K562 (cell line): ENCODE measurements at regions of chr11 and their contacts with region 1.

Region 1: DNA sequence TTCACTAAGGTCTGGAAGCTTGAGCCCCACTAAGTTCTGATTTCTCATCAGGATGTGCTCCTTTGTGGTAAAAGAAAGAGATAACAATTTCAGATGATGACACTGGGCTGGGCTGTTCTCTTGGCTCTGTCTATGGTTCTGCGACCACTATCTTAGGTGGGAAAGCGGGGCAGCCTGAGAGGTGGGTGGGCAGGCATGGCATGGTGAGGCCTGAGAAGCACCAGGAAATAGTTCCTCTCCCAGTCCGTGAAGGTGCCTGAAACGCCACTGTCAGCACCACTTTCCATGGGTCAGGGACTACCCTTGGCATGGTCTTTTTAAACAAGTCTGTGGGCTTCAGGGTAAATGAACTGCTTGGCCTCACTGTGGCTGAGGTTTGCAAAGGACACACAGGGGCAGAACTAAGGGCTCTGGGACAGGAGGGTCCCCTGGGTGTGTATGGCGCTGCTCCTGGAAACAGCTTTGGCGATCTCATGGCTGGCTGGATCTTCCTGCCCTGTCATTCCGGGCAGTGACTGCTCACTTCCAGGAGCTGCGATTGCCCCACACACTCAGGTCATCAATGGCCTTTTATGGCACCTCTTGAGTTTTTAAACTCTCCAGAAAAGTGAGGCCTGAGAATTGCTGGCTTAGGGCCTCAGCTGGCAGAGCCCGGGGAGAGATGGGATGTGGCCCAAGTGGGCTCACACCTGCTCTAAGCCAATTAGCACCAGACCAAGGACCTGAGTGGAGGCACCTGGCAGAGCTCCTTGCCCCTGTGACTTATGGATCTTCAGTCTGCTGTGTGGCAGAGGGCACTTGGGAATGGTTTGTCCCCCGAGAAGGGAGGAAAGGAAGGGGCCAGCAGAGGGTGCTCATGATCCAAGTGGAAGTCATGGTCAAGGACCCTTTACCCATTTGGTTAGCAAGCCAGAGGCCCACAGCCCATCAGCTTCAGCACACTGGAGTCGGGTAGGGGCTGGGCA is 55.6 kb upstream of the LYVE1 start:
- DNase-seq: peak; percentile 60 to 67 (median 62)
- ATAC-seq: peak; percentile 79
- H3K4me3 ChIP-seq: no peak overlapping the region
- H3K27ac ChIP-seq: no peak overlapping the region; the same call in 2 of the 3 replicates
- H3K4me1 ChIP-seq: peaks cover 9 to 13% of the 10 kb centered on the region in 2 experiments; a peak in 4 of 5 replicates
- H3K27me3 ChIP-seq: no peaks in the 10 kb centered on the region
- CTCF ChIP-seq: peak; percentile 72 to 80 (median 77)
- EP300 ChIP-seq: no peak
- POLR2A ChIP-seq: no peak
- RAD21 ChIP-seq: peak; percentile 78 to 89

Region 2: GRCh38 chr11:10413268-10413667 is 210.8 kb before region 1 on chr11:
- CTCF ChIA-PET with region 1: no interaction called
- POLR2A ChIA-PET with region 1: no interaction called
- in situ Hi-C with region 1: no loop called
- intact Hi-C with region 1: loop called (anchors 10 kb)
- DNase-seq: peak in 1 of 4 experiments; percentile 61
- ATAC-seq: peak; percentile 83
- H3K4me3 ChIP-seq: no peak overlapping the region
- H3K27ac ChIP-seq: no peak overlapping the region
- H3K4me1 ChIP-seq: peaks cover 12 to 19% of the 10 kb centered on the region in 2 experiments; a peak in 2 of 5 replicates
- H3K27me3 ChIP-seq: no peaks in the 10 kb centered on the region
- CTCF ChIP-seq: peak; percentile 45 to 66 (median 56); a peak in 5 of 6 replicates
- EP300 ChIP-seq: no peak
- POLR2A ChIP-seq: no peak
- RAD21 ChIP-seq: peak; percentile 80 to 93

Region 3: DNA sequence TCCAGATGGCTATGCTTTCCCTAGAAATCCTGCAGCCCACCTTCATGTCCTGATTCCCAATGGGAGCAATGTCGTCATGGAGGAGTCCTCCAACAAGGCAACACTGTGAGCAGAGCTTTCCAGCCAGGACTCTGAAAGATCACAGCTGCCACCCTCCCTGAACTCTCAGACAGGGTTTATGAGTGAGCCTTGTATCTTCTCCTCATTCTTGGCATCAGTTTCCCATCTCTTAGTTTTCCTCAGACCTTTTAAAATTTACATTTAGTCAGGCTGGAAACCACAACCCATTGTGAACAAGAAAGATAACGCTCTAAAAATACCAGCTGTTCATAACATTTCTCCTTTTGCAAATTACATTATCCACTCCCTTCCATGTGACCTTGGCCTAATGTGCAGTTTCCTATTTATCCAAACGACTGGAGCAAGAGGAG is 40.0 kb before region 1 on chr11:
- CTCF ChIA-PET with region 1: no interaction called
- POLR2A ChIA-PET with region 1: no interaction called
- in situ Hi-C with region 1: no loop called
- intact Hi-C with region 1: loop called (anchors 5 kb)
- DNase-seq: peak in 1 of 4 experiments; percentile 51
- ATAC-seq: no peak
- H3K4me3 ChIP-seq: no peak overlapping the region
- H3K27ac ChIP-seq: peak overlapping the region; percentile 20; the same call in 2 of the 3 replicates
- H3K4me1 ChIP-seq: peaks cover 20 to 77% of the 10 kb centered on the region in 2 experiments
- H3K27me3 ChIP-seq: no peaks in the 10 kb centered on the region
- CTCF ChIP-seq: no peak
- EP300 ChIP-seq: 0 out of 2 replicates have a peak, but pooled peaks have one; percentile 36
- POLR2A ChIP-seq: no peak
- RAD21 ChIP-seq: no peak

Region 4: DNA sequence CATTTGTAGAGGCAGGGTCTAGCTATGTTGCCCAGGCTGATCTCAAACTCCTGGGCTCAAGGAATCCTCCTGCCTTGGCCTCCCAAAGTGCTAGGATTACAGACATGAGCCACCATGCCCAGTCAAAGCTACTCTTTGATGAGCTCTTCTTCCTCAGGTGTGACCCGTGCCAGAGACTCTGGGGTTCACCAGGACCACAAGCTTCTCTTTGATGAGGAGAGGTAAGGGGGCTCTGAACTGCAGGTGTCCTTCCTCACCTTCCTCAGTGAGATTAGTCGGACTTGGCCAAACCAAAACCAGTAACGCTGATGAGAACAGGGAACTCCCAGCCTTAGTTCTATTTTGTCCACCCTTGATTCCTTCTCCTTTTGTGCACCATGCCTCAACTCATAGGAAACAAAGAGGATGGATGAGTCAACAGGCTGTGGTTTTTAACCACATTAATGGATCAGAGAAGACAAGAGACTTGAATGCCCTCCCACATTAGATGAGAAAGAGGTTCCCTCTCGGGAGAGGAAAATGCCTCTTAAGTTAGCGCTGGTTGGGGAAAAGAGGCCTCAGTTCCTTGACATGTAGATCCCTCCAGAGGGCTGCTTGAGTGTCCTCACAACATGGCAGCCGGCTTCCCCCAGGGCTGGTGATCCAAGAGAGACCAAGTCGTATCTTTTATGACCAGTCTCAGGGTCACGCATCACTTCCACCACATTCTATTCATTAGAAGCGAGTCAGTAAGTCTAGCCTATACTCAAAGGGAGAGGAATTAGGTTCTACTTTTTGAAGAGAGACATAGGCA is 101.2 kb after region 1 on chr11:
- CTCF ChIA-PET with region 1: no interaction called
- POLR2A ChIA-PET with region 1: interaction called, 3 read pairs
- in situ Hi-C with region 1: loop called (anchors 5 kb)
- intact Hi-C with region 1: no loop called
- DNase-seq: peak in 1 of 4 experiments; percentile 47
- ATAC-seq: peak; percentile 26; the same call in 2 of the 3 replicates
- H3K4me3 ChIP-seq: no peak overlapping the region
- H3K27ac ChIP-seq: no peak overlapping the region
- H3K4me1 ChIP-seq: peaks cover 0 to 6% of the 10 kb centered on the region in 2 experiments; a peak in 4 of 5 replicates
- H3K27me3 ChIP-seq: no peaks in the 10 kb centered on the region; a peak in 1 of 5 replicates
- CTCF ChIP-seq: no peak
- EP300 ChIP-seq: no peak
- POLR2A ChIP-seq: no peak
- RAD21 ChIP-seq: no peak

Region 5: DNA sequence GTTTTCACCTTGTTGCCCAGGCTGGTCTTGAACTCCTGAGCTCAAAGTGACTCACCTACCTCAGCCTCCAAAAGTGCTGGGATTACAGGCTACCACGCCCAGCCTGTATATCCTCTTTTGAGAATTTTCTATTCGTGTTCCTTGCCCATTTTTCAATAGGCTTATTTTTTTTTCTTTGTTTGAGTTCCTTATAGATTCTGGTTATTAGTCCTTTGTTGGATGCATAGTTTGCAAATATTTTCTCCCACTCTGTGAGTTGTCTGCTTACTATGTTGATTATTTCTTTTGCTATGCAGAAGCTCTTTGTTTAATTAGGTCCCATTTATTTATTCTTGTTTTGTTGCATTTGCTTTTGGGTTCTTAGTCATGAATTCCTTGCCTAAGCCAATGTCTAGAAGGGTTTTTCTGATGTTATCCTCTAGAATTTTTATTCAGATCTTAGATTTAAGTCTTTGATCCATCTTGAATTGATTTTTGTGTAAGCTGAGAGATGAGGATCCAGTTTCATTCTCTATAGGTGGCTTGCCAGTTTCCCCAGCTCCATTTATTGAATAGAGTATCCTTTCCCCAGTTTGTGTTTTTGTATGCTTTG is 251.4 kb after region 1 on chr11:
- CTCF ChIA-PET with region 1: no interaction called
- POLR2A ChIA-PET with region 1: no interaction called
- in situ Hi-C with region 1: no loop called
- intact Hi-C with region 1: no loop called
- DNase-seq: no peak
- ATAC-seq: no peak
- H3K4me3 ChIP-seq: no peak overlapping the region
- H3K27ac ChIP-seq: no peak overlapping the region
- H3K4me1 ChIP-seq: peaks cover 0 to 3% of the 10 kb centered on the region in 2 experiments; a peak in 1 of 5 replicates
- H3K27me3 ChIP-seq: no peaks in the 10 kb centered on the region
- CTCF ChIP-seq: no peak
- EP300 ChIP-seq: no peak
- POLR2A ChIP-seq: no peak
- RAD21 ChIP-seq: no peak